GM13977 (cell line): ENCODE measurements at regions of chr12 and their contacts with region 1.

Region 1: DNA sequence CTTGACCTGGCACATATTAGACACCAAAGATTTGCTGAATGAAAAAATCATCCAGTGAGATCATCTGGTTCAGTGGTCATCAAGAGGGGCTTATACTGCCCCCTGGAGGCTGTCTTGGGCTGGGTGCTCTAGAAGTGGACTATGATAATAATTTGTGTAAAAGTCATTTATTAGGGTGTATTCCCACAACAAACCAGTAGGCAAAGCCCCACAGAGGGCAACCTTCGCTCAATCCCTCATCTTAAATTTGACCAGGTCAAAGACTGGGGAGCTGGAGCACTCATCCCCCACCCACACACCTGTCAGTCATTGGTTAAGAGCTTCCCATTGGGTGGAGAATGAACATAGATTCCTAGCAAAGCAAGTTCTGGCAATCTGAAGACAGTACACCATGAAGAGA is 20.0 kb upstream of the FICD start:
- DNase-seq: peak; percentile 65
- CTCF ChIP-seq: peak; percentile 63

Region 2: GRCh38 chr12:107992870-107993451 is 502.1 kb before region 1 on chr12:
- in situ Hi-C with region 1: loop called (anchors 25 kb)
- DNase-seq: peak; percentile 10
- CTCF ChIP-seq: peak; percentile 46